ENCODE measurements at regions of chr9 and their contacts with region 1.

Region 1: DNA sequence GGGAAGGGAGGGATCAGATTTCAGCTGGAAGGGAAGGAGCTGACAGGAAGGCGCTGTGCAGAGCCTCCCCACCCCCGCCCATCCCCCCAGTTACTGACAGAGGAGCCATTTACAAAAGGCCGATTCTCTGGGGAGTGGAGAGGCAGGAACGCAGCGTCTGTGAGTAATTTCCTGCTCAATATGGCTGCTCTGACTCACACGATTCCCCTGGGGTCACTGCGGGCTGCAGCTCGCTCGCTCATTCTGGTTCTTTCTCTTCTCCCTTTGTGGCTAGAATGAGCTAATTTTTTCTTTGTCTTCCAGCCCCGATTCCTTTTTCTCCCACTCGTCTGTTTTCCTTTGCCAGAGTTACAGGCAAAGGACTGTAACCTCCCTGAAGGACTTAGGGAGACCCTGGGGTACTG is 28.8 kb downstream of the PTPA start:
- DNase-seq: peak; percentile 91
- H3K4me3 Mint-ChIP-seq: peak overlapping the region; percentile 64
- H3K27ac Mint-ChIP-seq: peak overlapping the region; percentile 91
- H3K4me1 Mint-ChIP-seq: peaks cover 37% of the 10 kb centered on the region
- H3K27me3 Mint-ChIP-seq: no peaks in the 10 kb centered on the region

Region 2: GRCh38 chr9:129125476-129125875 is 14.5 kb before region 1 on chr9:
- CTCF ChIA-PET with region 1: interaction called, 112 read pairs
- POLR2A ChIA-PET with region 1: no interaction called
- intact Hi-C with region 1: no loop called
- DNase-seq: no peak
- H3K4me3 Mint-ChIP-seq: no peak overlapping the region
- H3K27ac Mint-ChIP-seq: no peak overlapping the region
- H3K4me1 Mint-ChIP-seq: no peaks in the 10 kb centered on the region
- H3K27me3 Mint-ChIP-seq: no peaks in the 10 kb centered on the region

Region 3: DNA sequence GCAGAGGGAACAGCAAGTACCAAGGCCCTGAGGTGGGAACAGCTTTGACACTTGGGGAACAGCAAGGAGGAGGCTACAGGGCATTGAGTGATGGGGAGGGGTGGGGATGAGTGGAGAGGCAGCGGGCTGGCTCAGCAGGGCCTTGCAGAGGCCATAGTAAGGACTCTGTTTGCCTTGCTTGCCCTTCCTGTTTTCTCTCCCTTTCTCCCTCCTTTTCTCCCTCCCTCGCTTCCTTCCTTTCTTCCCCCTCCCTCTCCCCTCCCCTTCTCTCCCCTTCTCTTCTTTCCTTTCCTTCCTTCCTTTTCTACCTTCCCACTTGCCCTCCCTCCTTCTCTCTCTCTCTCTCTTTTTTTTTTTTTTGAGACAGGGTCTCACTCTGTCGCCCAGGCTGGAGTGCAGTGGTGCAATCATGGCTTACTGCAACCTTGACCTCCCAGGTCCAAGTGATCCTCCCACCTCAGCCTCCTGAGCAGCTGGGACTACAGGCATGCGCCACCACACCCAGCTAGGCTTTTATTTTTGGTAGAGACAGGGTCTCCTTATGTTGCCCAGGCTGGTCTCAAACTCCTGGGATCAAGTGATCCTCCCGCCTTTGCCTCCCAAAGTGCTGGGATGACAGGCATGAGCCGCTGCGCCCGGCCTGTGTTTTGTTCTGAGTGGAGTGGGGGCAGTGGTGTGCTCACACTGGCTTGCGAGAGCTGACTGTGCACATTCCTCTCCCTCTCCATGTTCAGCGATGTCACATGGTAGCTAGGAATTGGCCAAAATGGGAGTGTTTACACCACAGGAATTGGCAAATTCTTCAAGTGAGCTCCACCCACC is 20.9 kb after region 1 on chr9:
- CTCF ChIA-PET with region 1: interaction called, 32 read pairs
- POLR2A ChIA-PET with region 1: no interaction called
- intact Hi-C with region 1: no loop called
- DNase-seq: no peak
- H3K4me3 Mint-ChIP-seq: no peak overlapping the region
- H3K27ac Mint-ChIP-seq: no peak overlapping the region
- H3K4me1 Mint-ChIP-seq: no peaks in the 10 kb centered on the region
- H3K27me3 Mint-ChIP-seq: no peaks in the 10 kb centered on the region

Region 4: GRCh38 chr9:129177791-129178559 is 38.0 kb after region 1 on chr9 and contains the start of gene IER5L:
- CTCF ChIA-PET with region 1: interaction called, 119 read pairs
- POLR2A ChIA-PET with region 1: interaction called, 7 read pairs
- intact Hi-C with region 1: loop called (anchors 1 kb)
- DNase-seq: peak; percentile 94
- H3K4me3 Mint-ChIP-seq: peak within 1 kb of the TSS; percentile 85
- H3K27ac Mint-ChIP-seq: no peak within 1 kb of the TSS
- H3K4me1 Mint-ChIP-seq: peaks cover 3% of the 10 kb centered on the region
- H3K27me3 Mint-ChIP-seq: peaks cover 8% of the 10 kb centered on the region
- total RNA-seq, gene IER5L: 1.3 to 1.5 TPM

Region 5: DNA sequence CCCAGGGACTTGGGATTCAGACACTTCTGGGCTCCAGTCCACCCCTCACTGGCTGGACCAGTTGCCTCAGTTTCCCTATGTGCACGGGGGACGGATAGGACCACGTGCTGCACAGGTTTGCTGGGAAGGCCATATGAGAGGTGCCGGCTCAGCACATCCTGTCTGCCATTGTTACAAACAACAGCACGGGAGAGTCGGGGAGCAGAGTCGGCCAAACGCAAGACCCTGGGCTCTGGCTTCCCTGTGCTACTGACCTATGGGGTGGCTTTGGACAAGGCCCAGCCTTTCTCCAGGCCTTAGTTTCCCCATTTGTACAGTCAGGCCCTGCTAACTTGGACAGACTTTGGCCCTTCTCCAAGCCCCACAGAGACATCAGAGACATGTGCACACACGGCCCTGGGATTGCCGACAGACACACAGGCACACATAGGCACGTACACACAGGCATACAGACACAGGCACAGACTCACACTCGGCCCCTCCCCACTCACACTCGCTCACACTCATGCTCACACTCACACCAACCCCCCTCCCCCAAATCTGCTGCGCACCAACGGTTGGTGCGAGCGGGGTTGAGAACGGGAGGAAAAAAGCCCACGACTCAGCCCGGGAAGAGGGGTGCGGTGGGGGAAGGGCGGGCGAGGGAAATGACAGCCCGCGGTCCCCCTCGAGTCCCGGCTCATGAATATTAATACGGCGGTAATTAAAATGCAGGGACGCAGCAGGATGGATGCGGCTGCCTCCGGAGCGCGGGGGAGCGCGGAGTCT is 347.8 kb after region 1 on chr9:
- CTCF ChIA-PET with region 1: interaction called, 4 read pairs
- POLR2A ChIA-PET with region 1: interaction called, 3 read pairs
- intact Hi-C with region 1: loop called (anchors 1 kb)
- DNase-seq: peak; percentile 58
- H3K4me3 Mint-ChIP-seq: peak overlapping the region; percentile 85
- H3K27ac Mint-ChIP-seq: peak overlapping the region; percentile 97
- H3K4me1 Mint-ChIP-seq: peaks cover 68% of the 10 kb centered on the region
- H3K27me3 Mint-ChIP-seq: no peaks in the 10 kb centered on the region

Region 6: GRCh38 chr9:129610473-129611301 is 470.7 kb after region 1 on chr9:
- CTCF ChIA-PET with region 1: interaction called, 70 read pairs
- POLR2A ChIA-PET with region 1: interaction called, 4 read pairs
- intact Hi-C with region 1: loop called (anchors 2 kb)
- DNase-seq: peak; percentile 84
- H3K4me3 Mint-ChIP-seq: peak overlapping the region; percentile 69
- H3K27ac Mint-ChIP-seq: peak overlapping the region; percentile 54
- H3K4me1 Mint-ChIP-seq: peaks cover 31% of the 10 kb centered on the region
- H3K27me3 Mint-ChIP-seq: peaks cover 2% of the 10 kb centered on the region

Region 7: DNA sequence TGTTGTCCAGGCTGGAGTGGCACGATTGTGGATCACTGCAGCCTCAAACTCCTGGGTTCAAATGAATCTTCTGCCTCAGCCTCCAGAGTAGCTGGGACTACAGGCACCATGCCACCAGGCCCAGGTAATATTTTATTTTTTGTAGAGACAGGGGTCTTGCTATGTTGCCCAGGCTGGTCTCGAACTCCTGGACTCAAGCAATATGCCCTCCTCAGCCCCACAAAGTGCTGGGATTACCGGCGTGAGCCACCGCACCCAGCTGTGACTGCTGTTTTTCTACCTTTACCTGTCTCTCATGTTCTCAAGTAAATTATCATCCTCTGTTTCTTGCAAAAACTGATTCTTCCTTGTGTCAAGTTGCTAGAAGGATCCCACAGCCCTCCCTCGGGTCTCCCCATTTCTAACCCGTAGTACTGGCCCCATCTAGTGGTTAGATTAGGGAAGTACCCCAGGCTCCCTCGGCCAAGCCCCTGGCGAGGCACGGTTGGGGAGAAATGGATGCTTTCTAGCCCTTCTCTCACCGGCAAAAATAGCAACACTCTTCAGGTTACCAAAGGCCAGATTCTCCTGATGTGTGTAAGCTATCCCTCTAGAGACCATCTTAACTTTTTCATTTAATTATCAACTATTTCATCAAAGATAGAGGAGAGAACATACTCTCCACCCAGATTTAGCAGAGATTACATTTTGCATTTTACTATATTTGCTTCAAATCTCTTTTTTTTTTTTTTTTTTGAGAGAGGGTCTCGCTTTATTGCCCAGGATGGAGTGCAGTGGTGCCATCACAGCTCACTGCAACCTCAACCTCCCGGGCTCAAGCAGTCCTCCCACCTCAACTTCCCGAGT is 643.7 kb after region 1 on chr9:
- CTCF ChIA-PET with region 1: interaction called, 6 read pairs
- POLR2A ChIA-PET with region 1: no interaction called
- intact Hi-C with region 1: loop called (anchors 5 kb)
- DNase-seq: peak; percentile 80
- H3K4me3 Mint-ChIP-seq: no peak overlapping the region
- H3K27ac Mint-ChIP-seq: no peak overlapping the region
- H3K4me1 Mint-ChIP-seq: no peaks in the 10 kb centered on the region
- H3K27me3 Mint-ChIP-seq: no peaks in the 10 kb centered on the region